ENCODE measurements at regions of chr4 and their contacts with region 1.

Region 1: GRCh38 chr4:89737888-89738287 is 99.1 kb downstream of the SNCA start:
- DNase-seq: peak; percentile 58
- H3K4me3 ChIP-seq: no peak overlapping the region
- H3K27ac ChIP-seq: no peak overlapping the region
- H3K4me1 ChIP-seq: peaks cover 6% of the 10 kb centered on the region
- H3K27me3 ChIP-seq: no peaks in the 10 kb centered on the region
- CTCF ChIP-seq: no peak

Region 2: GRCh38 chr4:89752932-89753581 is 15.2 kb after region 1 on chr4:
- CTCF ChIA-PET with region 1: no interaction called
- dilution Hi-C with region 1: no loop called
- in situ Hi-C with region 1: no loop called
- intact Hi-C with region 1: loop called (anchors 2 kb)
- DNase-seq: peak; percentile 45
- H3K4me3 ChIP-seq: peak overlapping the region in 1 of 3 experiments; percentile 10
- H3K27ac ChIP-seq: peak overlapping the region; percentile 92
- H3K4me1 ChIP-seq: peaks cover 17% of the 10 kb centered on the region
- H3K27me3 ChIP-seq: no peaks in the 10 kb centered on the region
- CTCF ChIP-seq: no peak

Measured in mammary epithelial cell (primary cell).